ENCODE measurements at regions of chr9 and their contacts with region 1.

Region 1: GRCh38 chr9:14693206-14693861 is at the start of gene ZDHHC21:
- DNase-seq: peak; percentile 69
- ATAC-seq: peak; percentile 80
- H3K4me3 ChIP-seq: peak within 1 kb of the TSS; percentile 41 to 80 (median 68)
- H3K4me3 Mint-ChIP-seq: peak within 1 kb of the TSS; percentile 95
- H3K27ac ChIP-seq: peak within 1 kb of the TSS; percentile 27 to 72
- H3K27ac Mint-ChIP-seq: peak within 1 kb of the TSS; percentile 95
- H3K4me1 ChIP-seq: peaks cover 41 to 43% of the 10 kb centered on the region in 2 donors
- H3K4me1 Mint-ChIP-seq: peaks cover 49% of the 10 kb centered on the region
- H3K27me3 ChIP-seq: peaks cover 0 to 4% (median 0%) of the 10 kb centered on the region in 4 experiments
- H3K27me3 Mint-ChIP-seq: no peaks in the 10 kb centered on the region
- CTCF ChIP-seq: no peak
- total RNA-seq, gene ZDHHC21: 35.5 and 39.7 TPM in 2 replicates

Region 2: GRCh38 chr9:14578030-14578429 is 115.3 kb before region 1 on chr9:
- CTCF ChIA-PET with region 1: no interaction called
- POLR2A ChIA-PET with region 1: no interaction called
- intact Hi-C with region 1: no loop called
- DNase-seq: no peak
- ATAC-seq: no peak
- H3K4me3 ChIP-seq: no peak overlapping the region
- H3K4me3 Mint-ChIP-seq: no peak overlapping the region
- H3K27ac ChIP-seq: no peak overlapping the region
- H3K27ac Mint-ChIP-seq: no peak overlapping the region
- H3K4me1 ChIP-seq: no peaks in the 10 kb centered on the region
- H3K4me1 Mint-ChIP-seq: no peaks in the 10 kb centered on the region
- H3K27me3 ChIP-seq: no peaks in the 10 kb centered on the region
- H3K27me3 Mint-ChIP-seq: no peaks in the 10 kb centered on the region
- CTCF ChIP-seq: no peak

Region 3: GRCh38 chr9:14654932-14655331 is 38.4 kb before region 1 on chr9:
- CTCF ChIA-PET with region 1: interaction called, 8 read pairs
- POLR2A ChIA-PET with region 1: no interaction called
- intact Hi-C with region 1: loop called (anchors 5 kb)
- DNase-seq: no peak
- ATAC-seq: no peak
- H3K4me3 ChIP-seq: no peak overlapping the region
- H3K4me3 Mint-ChIP-seq: no peak overlapping the region
- H3K27ac ChIP-seq: no peak overlapping the region
- H3K27ac Mint-ChIP-seq: no peak overlapping the region
- H3K4me1 ChIP-seq: no peaks in the 10 kb centered on the region
- H3K4me1 Mint-ChIP-seq: no peaks in the 10 kb centered on the region
- H3K27me3 ChIP-seq: no peaks in the 10 kb centered on the region
- H3K27me3 Mint-ChIP-seq: no peaks in the 10 kb centered on the region
- CTCF ChIP-seq: no peak

Region 4: GRCh38 chr9:14677406-14677805 is 15.9 kb before region 1 on chr9:
- CTCF ChIA-PET with region 1: no interaction called
- POLR2A ChIA-PET with region 1: no interaction called
- intact Hi-C with region 1: no loop called
- DNase-seq: no peak
- ATAC-seq: no peak
- H3K4me3 ChIP-seq: no peak overlapping the region
- H3K4me3 Mint-ChIP-seq: no peak overlapping the region
- H3K27ac ChIP-seq: no peak overlapping the region
- H3K27ac Mint-ChIP-seq: no peak overlapping the region
- H3K4me1 ChIP-seq: no peaks in the 10 kb centered on the region
- H3K4me1 Mint-ChIP-seq: peaks cover 41% of the 10 kb centered on the region
- H3K27me3 ChIP-seq: no peaks in the 10 kb centered on the region
- H3K27me3 Mint-ChIP-seq: no peaks in the 10 kb centered on the region
- CTCF ChIP-seq: no peak

Region 5: GRCh38 chr9:14706530-14707140 is 13.3 kb after region 1 on chr9:
- CTCF ChIA-PET with region 1: no interaction called
- POLR2A ChIA-PET with region 1: no interaction called
- intact Hi-C with region 1: loop called (anchors 1 kb)
- DNase-seq: peak; percentile 58
- ATAC-seq: peak; percentile 51
- H3K4me3 ChIP-seq: no peak overlapping the region
- H3K4me3 Mint-ChIP-seq: peak overlapping the region; percentile 28
- H3K27ac ChIP-seq: no peak overlapping the region
- H3K27ac Mint-ChIP-seq: peak overlapping the region; percentile 60
- H3K4me1 ChIP-seq: peaks cover 6 to 16% of the 10 kb centered on the region in 2 donors
- H3K4me1 Mint-ChIP-seq: peaks cover 18% of the 10 kb centered on the region
- H3K27me3 ChIP-seq: peaks cover 0 to 7% (median 1%) of the 10 kb centered on the region in 4 experiments
- H3K27me3 Mint-ChIP-seq: peaks cover 6% of the 10 kb centered on the region
- CTCF ChIP-seq: no peak

Measured in B cell (primary cell).